ENCODE measurements at regions of chr11 and their contacts with region 1.

Region 1: GRCh38 chr11:73876424-73877300 is at the starts of genes COA4 and PAAF1:
- DNase-seq: peak; percentile 97
- H3K4me3 ChIP-seq: peak within 1 kb of the TSS; percentile 69 to 83 (median 76)
- H3K27ac ChIP-seq: peak within 1 kb of the TSS; percentile 82 to 92 (median 87)
- H3K4me1 ChIP-seq: peaks cover 0 to 22% (median 17%) of the 10 kb centered on the region in 4 donors
- H3K27me3 ChIP-seq: no peaks in the 10 kb centered on the region
- CTCF ChIP-seq: no peak
- EP300 ChIP-seq: no peak
- POLR2A ChIP-seq: peak in 1 of 2 donors; percentile 38
- total RNA-seq, gene COA4: 64.3 to 87.4 (median 75.8) TPM
- total RNA-seq, gene PAAF1: 16.7 to 20.7 (median 19.6) TPM

Region 2: DNA sequence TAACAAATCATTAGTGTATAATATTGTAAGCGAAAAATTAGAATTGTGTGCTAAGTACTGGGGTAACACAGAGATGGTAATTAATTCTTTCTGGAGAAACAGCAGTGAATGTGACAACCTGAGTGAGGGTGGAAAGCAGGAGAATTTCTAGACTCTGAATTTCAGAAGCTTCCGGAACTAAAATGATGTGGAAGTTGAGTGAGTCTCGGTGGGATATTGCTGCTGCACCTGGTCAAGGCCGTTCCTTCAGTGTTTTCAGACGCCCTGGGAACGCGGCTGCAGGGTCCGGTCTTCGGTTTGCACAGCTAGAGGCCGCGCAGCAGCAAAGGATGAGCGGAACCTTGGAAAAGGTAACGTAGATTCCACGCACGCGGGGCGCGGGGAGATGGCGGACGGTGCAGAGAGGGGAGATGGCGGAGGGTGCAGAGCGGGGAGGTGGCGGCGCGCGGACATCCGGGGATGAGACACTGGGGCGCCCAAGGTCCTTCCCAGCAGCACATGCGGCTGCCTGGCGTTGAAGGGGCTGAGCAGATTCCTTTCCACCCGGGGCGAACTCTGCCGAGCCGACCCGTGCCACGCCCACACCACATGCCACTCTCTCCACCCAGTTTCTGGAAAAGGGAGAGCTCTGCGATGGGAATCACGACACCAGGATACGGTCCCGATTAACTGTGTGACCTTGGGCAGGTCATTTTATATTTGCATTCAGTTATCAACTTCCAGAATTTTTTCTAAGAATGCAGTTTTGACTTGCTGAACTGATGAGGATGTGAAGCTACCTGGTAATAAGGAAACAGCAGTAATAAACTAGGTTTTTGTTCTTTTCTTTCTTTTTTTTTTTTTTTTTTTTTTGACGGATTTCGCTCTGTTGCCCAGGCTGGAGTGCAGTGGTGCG is 88.8 kb before region 1 on chr11 and contains the start of gene MRPL48:
- intact Hi-C with region 1: loop called (anchors 5 kb)
- DNase-seq: peak; percentile 94
- H3K4me3 ChIP-seq: peak within 1 kb of the TSS; percentile 54 to 78 (median 73)
- H3K27ac ChIP-seq: peak within 1 kb of the TSS; percentile 79 to 95 (median 80)
- H3K4me1 ChIP-seq: peaks cover 0 to 18% (median 18%) of the 10 kb centered on the region in 4 donors
- H3K27me3 ChIP-seq: no peaks in the 10 kb centered on the region
- CTCF ChIP-seq: no peak
- EP300 ChIP-seq: no peak
- POLR2A ChIP-seq: no peak
- total RNA-seq, gene MRPL48: 7.7 to 33.2 (median 19.8) TPM

Region 3: DNA sequence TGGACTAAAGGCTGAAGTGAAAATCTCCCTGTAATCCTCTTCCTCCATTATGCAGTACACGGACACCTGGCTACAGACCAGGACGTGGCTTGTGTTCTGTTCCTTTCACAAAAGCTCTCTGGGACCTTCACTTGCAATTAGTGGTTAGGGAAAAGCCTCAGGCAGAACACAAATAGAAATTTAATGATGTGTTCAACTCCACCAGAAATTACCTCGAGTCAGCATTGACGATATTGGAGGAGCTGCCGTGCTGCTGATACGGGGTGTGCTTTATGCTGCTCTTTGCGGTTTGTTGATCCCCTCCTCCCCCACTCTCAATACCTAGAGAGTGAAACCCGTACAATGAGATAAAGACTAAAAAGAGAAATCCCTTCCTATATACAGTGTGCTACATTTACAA is 764.6 kb after region 1 on chr11:
- intact Hi-C with region 1: no loop called
- DNase-seq: no peak
- H3K4me3 ChIP-seq: no peak overlapping the region
- H3K27ac ChIP-seq: peak overlapping the region in 2 of 4 donors; percentile 85 to 89
- H3K4me1 ChIP-seq: peaks cover 0 to 81% (median 64%) of the 10 kb centered on the region in 4 donors
- H3K27me3 ChIP-seq: no peaks in the 10 kb centered on the region
- CTCF ChIP-seq: no peak
- EP300 ChIP-seq: no peak
- POLR2A ChIP-seq: no peak

Measured in sigmoid colon (tissue), 7 donors.